Activated naive CD4-positive, alpha-beta T cell treated with anti-CD3 and anti-CD28 coated beads for 36 hours (primary cell): ENCODE measurements at regions of chr9 and their contacts with region 1.

Region 1: GRCh38 chr9:83707768-83708514 is at the start of gene UBQLN1:
- DNase-seq: peak; percentile 95
- H3K4me3 Mint-ChIP-seq: peak within 1 kb of the TSS; percentile 89
- H3K27ac Mint-ChIP-seq: peak within 1 kb of the TSS; percentile 98
- H3K4me1 Mint-ChIP-seq: peaks cover 37% of the 10 kb centered on the region
- H3K27me3 Mint-ChIP-seq: no peaks in the 10 kb centered on the region
- total RNA-seq, gene UBQLN1: 84.8 to 87.1 TPM

Region 2: GRCh38 chr9:83473488-83473971 is 234.4 kb before region 1 on chr9:
- CTCF ChIA-PET with region 1: no interaction called
- intact Hi-C with region 1: loop called (anchors 10 kb)
- DNase-seq: no peak
- H3K4me3 Mint-ChIP-seq: peak overlapping the region; percentile 35
- H3K27ac Mint-ChIP-seq: peak overlapping the region; percentile 46
- H3K4me1 Mint-ChIP-seq: peaks cover 28% of the 10 kb centered on the region
- H3K27me3 Mint-ChIP-seq: no peaks in the 10 kb centered on the region

Region 3: GRCh38 chr9:83649080-83649479 is 58.9 kb before region 1 on chr9:
- CTCF ChIA-PET with region 1: interaction called, 6 read pairs
- intact Hi-C with region 1: loop called (anchors 1 kb)
- DNase-seq: peak; percentile 82
- H3K4me3 Mint-ChIP-seq: no peak overlapping the region
- H3K27ac Mint-ChIP-seq: no peak overlapping the region
- H3K4me1 Mint-ChIP-seq: peaks cover 3% of the 10 kb centered on the region
- H3K27me3 Mint-ChIP-seq: no peaks in the 10 kb centered on the region

Region 4: DNA sequence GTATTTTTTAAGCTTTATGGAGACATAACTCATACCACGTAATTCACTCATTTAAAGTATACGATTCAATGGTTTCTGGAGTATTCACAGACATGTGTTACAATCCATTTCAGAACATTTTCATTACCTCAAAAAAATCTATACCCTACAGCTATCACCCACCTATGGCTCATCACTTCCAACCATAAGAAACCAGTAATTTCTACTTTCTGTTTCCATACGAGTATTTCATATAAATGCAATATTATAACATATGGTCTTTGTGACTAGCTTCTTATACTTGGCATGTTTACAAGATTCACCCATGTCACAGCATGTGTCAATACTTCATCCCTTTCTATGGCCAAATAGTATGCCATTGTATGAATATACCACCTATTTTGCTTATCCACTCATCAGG is 19.0 kb before region 1 on chr9:
- CTCF ChIA-PET with region 1: no interaction called
- intact Hi-C with region 1: loop called (anchors 1 kb)
- DNase-seq: no peak
- H3K4me3 Mint-ChIP-seq: no peak overlapping the region
- H3K27ac Mint-ChIP-seq: peak overlapping the region; percentile 44
- H3K4me1 Mint-ChIP-seq: peaks cover 66% of the 10 kb centered on the region
- H3K27me3 Mint-ChIP-seq: no peaks in the 10 kb centered on the region

Region 5: GRCh38 chr9:84315278-84315877 is 607.4 kb after region 1 on chr9:
- CTCF ChIA-PET with region 1: no interaction called
- intact Hi-C with region 1: no loop called
- DNase-seq: peak; percentile 79
- H3K4me3 Mint-ChIP-seq: no peak overlapping the region
- H3K27ac Mint-ChIP-seq: no peak overlapping the region
- H3K4me1 Mint-ChIP-seq: peaks cover 14% of the 10 kb centered on the region
- H3K27me3 Mint-ChIP-seq: no peaks in the 10 kb centered on the region